ENCODE measurements at regions of chr10 and their contacts with region 1.

Region 1: GRCh38 chr10:62384057-62384446 is 9.9 kb downstream of the ZNF365 start:
- DNase-seq: peak; percentile 11
- H3K4me3 Mint-ChIP-seq: no peak overlapping the region
- H3K27ac Mint-ChIP-seq: no peak overlapping the region
- H3K4me1 Mint-ChIP-seq: peaks cover 7% of the 10 kb centered on the region
- H3K27me3 Mint-ChIP-seq: peaks cover 24% of the 10 kb centered on the region

Region 2: GRCh38 chr10:62352356-62352970 is 31.6 kb before region 1 on chr10:
- intact Hi-C with region 1: loop called (anchors 1 kb)
- DNase-seq: no peak
- H3K4me3 Mint-ChIP-seq: no peak overlapping the region
- H3K27ac Mint-ChIP-seq: peak overlapping the region; percentile 7
- H3K4me1 Mint-ChIP-seq: peaks cover 11% of the 10 kb centered on the region
- H3K27me3 Mint-ChIP-seq: peaks cover 3% of the 10 kb centered on the region

Region 3: DNA sequence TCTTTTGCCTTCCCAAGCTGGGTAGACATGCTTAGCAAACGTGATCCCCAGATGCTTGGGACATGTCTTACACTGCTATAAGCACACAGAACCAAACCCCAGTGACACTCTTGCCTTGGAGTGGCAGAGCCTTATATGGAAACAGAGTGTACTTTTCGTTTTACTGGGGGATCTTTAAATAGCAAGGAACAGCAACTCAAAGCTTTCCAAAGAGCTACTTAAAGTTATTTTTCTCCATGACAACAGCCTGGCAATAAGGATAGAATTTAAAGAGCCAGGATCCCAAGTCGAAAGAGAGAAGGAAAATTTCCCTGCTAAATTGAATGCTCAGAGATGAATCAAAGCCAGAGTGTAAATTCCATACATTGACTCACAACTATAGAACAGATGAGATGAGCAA is 58.0 kb after region 1 on chr10:
- intact Hi-C with region 1: no loop called
- DNase-seq: no peak
- H3K4me3 Mint-ChIP-seq: no peak overlapping the region
- H3K27ac Mint-ChIP-seq: no peak overlapping the region
- H3K4me1 Mint-ChIP-seq: no peaks in the 10 kb centered on the region
- H3K27me3 Mint-ChIP-seq: peaks cover 23% of the 10 kb centered on the region